Calu3 (cell line): ENCODE measurements at regions of chr6 and their contacts with region 1.

Region 1: DNA sequence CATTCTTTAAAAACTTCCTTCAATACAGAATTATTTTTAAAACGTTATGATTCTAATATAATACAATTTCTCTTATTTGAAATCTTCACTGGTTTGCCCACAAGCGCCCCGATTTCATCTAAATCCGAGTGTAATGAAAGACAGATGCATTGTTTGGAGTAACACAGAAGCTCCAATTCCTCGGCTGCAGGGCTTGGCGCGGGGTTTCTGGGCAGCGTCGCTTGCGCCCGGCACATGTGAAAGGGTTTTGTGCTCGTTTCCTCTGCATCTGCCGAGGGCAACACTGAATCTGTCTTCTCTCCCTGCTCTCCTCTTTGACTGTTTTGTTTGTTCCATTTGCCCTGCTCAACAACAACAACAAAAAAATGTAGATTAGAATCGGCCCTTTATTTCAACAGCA is 248.6 kb upstream of the QKI start:
- DNase-seq: no peak
- H3K4me3 Mint-ChIP-seq: no peak overlapping the region
- H3K27ac Mint-ChIP-seq: no peak overlapping the region
- H3K4me1 Mint-ChIP-seq: no peaks in the 10 kb centered on the region
- H3K27me3 Mint-ChIP-seq: no peaks in the 10 kb centered on the region
- CTCF ChIP-seq: no peak

Region 2: GRCh38 chr6:162856885-162857284 is 309.0 kb before region 1 on chr6:
- CTCF ChIA-PET with region 1: interaction called, 3 read pairs
- intact Hi-C with region 1: loop called (anchors 10 kb)
- DNase-seq: peak; percentile 59
- H3K4me3 Mint-ChIP-seq: peak overlapping the region; percentile 57
- H3K27ac Mint-ChIP-seq: peak overlapping the region; percentile 44
- H3K4me1 Mint-ChIP-seq: peaks cover 7% of the 10 kb centered on the region
- H3K27me3 Mint-ChIP-seq: no peaks in the 10 kb centered on the region
- CTCF ChIP-seq: peak; percentile 50

Region 3: GRCh38 chr6:163098827-163099479 is 67.0 kb before region 1 on chr6:
- CTCF ChIA-PET with region 1: no interaction called
- intact Hi-C with region 1: no loop called
- DNase-seq: no peak
- H3K4me3 Mint-ChIP-seq: no peak overlapping the region
- H3K27ac Mint-ChIP-seq: no peak overlapping the region
- H3K4me1 Mint-ChIP-seq: no peaks in the 10 kb centered on the region
- H3K27me3 Mint-ChIP-seq: no peaks in the 10 kb centered on the region
- CTCF ChIP-seq: no peak

Region 4: GRCh38 chr6:163504984-163505640 is 339.2 kb after region 1 on chr6:
- CTCF ChIA-PET with region 1: no interaction called
- intact Hi-C with region 1: no loop called
- DNase-seq: no peak
- H3K4me3 Mint-ChIP-seq: no peak overlapping the region
- H3K27ac Mint-ChIP-seq: no peak overlapping the region
- H3K4me1 Mint-ChIP-seq: peaks cover 3% of the 10 kb centered on the region
- H3K27me3 Mint-ChIP-seq: no peaks in the 10 kb centered on the region
- CTCF ChIP-seq: no peak